Mammary epithelial cell (primary cell): ENCODE measurements at regions of chr5 and their contacts with region 1.

Region 1: GRCh38 chr5:42889311-42889933 is 77.7 kb upstream of the SELENOP start:
- DNase-seq: peak; percentile 65
- H3K4me3 ChIP-seq: no peak overlapping the region
- H3K27ac ChIP-seq: no peak overlapping the region
- H3K4me1 ChIP-seq: no peaks in the 10 kb centered on the region
- H3K27me3 ChIP-seq: no peaks in the 10 kb centered on the region
- CTCF ChIP-seq: peak; percentile 94 to 96

Region 2: GRCh38 chr5:41856644-41857491 is 1032.6 kb before region 1 on chr5:
- CTCF ChIA-PET with region 1: interaction called, 4 read pairs
- dilution Hi-C with region 1: no loop called
- in situ Hi-C with region 1: loop called in 1 of 2 experiments (anchors 25 kb)
- intact Hi-C with region 1: loop called (anchors 1 kb)
- DNase-seq: peak; percentile 47
- H3K4me3 ChIP-seq: no peak overlapping the region
- H3K27ac ChIP-seq: no peak overlapping the region
- H3K4me1 ChIP-seq: no peaks in the 10 kb centered on the region
- H3K27me3 ChIP-seq: no peaks in the 10 kb centered on the region
- CTCF ChIP-seq: peak; percentile 74 to 78

Region 3: DNA sequence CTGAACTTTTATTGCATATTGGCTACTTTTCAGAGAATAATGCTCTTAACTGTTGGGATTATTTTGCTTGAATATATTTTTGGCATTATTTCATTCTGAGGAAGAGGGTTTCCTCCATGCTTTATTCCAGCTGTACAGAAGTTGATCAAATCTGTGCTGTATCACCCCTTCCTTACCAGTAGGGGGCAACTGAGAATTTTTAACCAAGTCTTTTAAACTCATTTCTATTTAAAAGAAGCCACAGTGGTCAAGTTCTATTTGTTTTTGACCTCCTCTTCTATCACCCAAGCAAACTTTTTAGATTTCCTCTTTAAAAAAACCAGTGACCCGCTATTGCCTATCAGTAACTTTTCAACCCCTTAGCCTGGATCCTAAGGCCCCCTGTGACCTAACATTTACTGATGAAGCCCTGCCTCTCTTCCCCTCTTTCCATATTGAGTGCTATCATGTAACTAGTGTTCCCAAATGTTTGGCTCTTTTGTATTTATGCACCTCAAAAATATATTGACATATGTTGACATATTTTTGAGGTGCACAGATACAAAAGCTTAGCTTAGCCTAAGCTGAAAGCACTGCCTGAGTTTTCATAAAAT is 883.8 kb before region 1 on chr5:
- CTCF ChIA-PET with region 1: no interaction called
- dilution Hi-C with region 1: no loop called
- in situ Hi-C with region 1: no loop called
- intact Hi-C with region 1: loop called (anchors 5 kb)
- DNase-seq: peak; percentile 8
- H3K4me3 ChIP-seq: no peak overlapping the region
- H3K27ac ChIP-seq: no peak overlapping the region
- H3K4me1 ChIP-seq: no peaks in the 10 kb centered on the region
- H3K27me3 ChIP-seq: no peaks in the 10 kb centered on the region
- CTCF ChIP-seq: peak; percentile 70 to 75

Region 4: GRCh38 chr5:42423285-42424165 is 465.9 kb before region 1 on chr5 and contains the start of gene GHR:
- CTCF ChIA-PET with region 1: no interaction called
- dilution Hi-C with region 1: no loop called
- in situ Hi-C with region 1: no loop called
- intact Hi-C with region 1: loop called (anchors 1 kb)
- DNase-seq: peak; percentile 84
- H3K4me3 ChIP-seq: peak within 1 kb of the TSS; percentile 49 to 81 (median 58)
- H3K27ac ChIP-seq: no peak within 1 kb of the TSS
- H3K4me1 ChIP-seq: peaks cover 17% of the 10 kb centered on the region
- H3K27me3 ChIP-seq: no peaks in the 10 kb centered on the region
- CTCF ChIP-seq: peak; percentile 48 to 75
- total RNA-seq, gene GHR: 2.8 to 5.5 TPM

Region 5: GRCh38 chr5:42583322-42583721 is 306.1 kb before region 1 on chr5:
- CTCF ChIA-PET with region 1: interaction called, 3 read pairs
- dilution Hi-C with region 1: no loop called
- in situ Hi-C with region 1: no loop called
- intact Hi-C with region 1: loop called (anchors 2 kb)
- DNase-seq: peak; percentile 78
- H3K4me3 ChIP-seq: no peak overlapping the region
- H3K27ac ChIP-seq: no peak overlapping the region
- H3K4me1 ChIP-seq: peaks cover 5% of the 10 kb centered on the region
- H3K27me3 ChIP-seq: no peaks in the 10 kb centered on the region
- CTCF ChIP-seq: peak; percentile 90 to 92

Region 6: DNA sequence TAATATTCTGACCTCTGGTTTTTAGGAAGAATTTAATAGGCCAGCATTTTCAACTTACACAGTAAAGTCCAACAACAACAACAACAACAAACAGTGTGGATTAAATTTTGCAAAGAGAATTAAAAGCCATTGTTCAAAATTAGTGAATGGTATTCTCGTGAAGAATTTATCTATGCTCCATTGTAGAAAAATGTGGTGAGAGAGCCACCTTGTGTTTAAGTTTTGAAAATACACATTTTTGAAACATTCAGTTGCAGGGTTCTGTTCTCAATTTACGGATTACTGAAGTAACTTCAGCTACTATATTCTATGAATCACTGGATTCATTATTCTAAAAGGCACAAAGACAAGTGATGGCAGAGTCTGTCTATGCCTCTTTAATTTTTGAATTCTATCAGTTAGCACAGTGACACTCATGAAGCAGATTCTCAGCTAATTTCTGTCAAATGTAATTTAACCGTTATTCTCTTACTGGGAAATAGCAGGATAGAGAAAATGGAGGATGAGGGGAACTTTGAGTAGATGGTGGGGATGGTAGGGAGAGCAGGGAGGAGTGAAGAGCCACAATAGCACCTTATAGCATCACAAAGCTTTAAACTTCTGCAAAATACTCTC is 121.8 kb before region 1 on chr5:
- CTCF ChIA-PET with region 1: interaction called, 9 read pairs
- dilution Hi-C with region 1: no loop called
- in situ Hi-C with region 1: no loop called
- intact Hi-C with region 1: loop called (anchors 1 kb)
- DNase-seq: peak; percentile 17
- H3K4me3 ChIP-seq: no peak overlapping the region
- H3K27ac ChIP-seq: no peak overlapping the region
- H3K4me1 ChIP-seq: no peaks in the 10 kb centered on the region
- H3K27me3 ChIP-seq: no peaks in the 10 kb centered on the region
- CTCF ChIP-seq: peak; percentile 28 to 48